Left ventricle myocardium inferior (tissue), 1 donor: ENCODE measurements at regions of chr19 and their contacts with region 1.

Region 1: DNA sequence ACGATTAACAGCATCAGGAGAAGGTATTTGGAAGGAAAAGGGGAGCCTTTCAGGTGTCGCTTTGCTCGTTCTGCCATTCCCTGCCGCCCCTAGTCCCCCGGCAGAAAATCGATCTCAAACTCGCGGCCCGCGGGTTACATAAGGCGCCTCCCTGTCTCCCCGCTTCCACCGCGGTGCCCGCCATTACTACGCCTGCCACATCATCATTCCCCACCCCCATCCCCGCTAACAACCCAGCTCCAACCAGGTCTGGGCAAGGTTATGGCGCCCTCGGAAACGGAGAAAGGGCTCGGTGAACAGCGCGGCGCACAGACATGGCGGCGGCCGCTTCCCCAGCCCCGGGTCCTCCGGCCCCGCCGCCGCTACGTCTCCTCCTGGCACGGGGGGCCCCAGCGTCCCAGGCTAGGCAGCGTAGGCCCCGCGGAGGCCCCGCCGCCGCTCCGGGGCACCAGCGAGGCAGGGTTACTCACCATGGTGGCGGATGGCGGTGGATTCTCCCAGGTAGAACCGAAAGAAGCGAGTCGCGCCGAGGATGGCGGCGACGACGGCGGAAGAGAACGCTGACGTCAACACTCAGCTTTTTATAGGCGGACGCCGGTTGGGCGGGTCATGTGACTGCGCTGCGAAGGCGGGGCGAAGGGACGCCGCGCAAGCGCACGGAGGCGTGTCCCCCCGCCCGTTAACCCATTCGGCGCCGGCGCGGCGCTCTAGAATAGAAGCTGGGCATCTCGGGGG is at the start of gene EEF2:
- DNase-seq: peak; percentile 90
- H3K4me3 ChIP-seq: peak within 1 kb of the TSS; percentile 88
- H3K27ac ChIP-seq: peak within 1 kb of the TSS; percentile 93
- H3K4me1 ChIP-seq: peaks cover 70% of the 10 kb centered on the region
- H3K27me3 ChIP-seq: no peaks in the 10 kb centered on the region
- CTCF ChIP-seq: no peak
- total RNA-seq, gene EEF2: 2,303 TPM

Region 2: DNA sequence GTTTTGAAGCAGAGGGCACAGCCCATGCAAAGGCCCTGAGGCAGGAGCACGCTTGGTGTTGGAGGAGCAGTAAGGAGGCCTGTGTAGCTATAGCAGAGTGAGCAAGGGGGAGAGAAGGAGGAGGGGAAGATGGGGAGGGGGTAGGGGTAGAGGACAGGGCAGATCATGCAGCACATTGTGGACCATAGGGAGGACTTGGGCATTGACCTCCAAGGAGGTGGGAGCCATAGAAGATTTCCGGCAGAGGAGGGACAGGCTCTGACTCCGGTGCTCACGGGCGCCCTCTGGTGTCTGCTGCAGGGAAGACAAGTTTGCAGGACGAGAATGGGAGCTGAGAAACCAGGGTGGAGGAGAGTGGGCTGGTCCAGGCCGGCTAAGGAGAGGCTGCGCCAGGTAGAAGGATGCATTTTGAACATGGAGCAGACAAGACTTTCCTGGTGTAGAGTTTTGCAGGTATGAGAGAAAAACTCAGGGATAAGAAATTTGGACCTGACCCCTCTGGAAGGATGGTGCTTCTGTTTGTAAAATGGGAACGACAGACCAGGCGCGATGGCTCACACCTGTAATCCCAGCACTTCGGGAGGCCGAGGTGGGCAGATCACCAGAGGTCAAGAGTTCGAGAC is 154.7 kb after region 1 on chr19:
- intact Hi-C with region 1: loop called (anchors 10 kb)
- DNase-seq: peak; percentile 73
- H3K4me3 ChIP-seq: no peak overlapping the region
- H3K27ac ChIP-seq: no peak overlapping the region
- H3K4me1 ChIP-seq: no peaks in the 10 kb centered on the region
- H3K27me3 ChIP-seq: no peaks in the 10 kb centered on the region
- CTCF ChIP-seq: peak; percentile 77